A673 (cell line): ENCODE measurements at regions of chr6 and their contacts with region 1.

Region 1: GRCh38 chr6:13795041-13795750 is 19.2 kb downstream of the MCUR1 start:
- DNase-seq: peak; percentile 92
- H3K4me3 ChIP-seq: peak overlapping the region; percentile 1
- H3K27ac ChIP-seq: peak overlapping the region; percentile 83
- H3K4me1 ChIP-seq: peaks cover 24% of the 10 kb centered on the region
- H3K27me3 ChIP-seq: no peaks in the 10 kb centered on the region
- CTCF ChIP-seq: peak; percentile 98

Region 2: DNA sequence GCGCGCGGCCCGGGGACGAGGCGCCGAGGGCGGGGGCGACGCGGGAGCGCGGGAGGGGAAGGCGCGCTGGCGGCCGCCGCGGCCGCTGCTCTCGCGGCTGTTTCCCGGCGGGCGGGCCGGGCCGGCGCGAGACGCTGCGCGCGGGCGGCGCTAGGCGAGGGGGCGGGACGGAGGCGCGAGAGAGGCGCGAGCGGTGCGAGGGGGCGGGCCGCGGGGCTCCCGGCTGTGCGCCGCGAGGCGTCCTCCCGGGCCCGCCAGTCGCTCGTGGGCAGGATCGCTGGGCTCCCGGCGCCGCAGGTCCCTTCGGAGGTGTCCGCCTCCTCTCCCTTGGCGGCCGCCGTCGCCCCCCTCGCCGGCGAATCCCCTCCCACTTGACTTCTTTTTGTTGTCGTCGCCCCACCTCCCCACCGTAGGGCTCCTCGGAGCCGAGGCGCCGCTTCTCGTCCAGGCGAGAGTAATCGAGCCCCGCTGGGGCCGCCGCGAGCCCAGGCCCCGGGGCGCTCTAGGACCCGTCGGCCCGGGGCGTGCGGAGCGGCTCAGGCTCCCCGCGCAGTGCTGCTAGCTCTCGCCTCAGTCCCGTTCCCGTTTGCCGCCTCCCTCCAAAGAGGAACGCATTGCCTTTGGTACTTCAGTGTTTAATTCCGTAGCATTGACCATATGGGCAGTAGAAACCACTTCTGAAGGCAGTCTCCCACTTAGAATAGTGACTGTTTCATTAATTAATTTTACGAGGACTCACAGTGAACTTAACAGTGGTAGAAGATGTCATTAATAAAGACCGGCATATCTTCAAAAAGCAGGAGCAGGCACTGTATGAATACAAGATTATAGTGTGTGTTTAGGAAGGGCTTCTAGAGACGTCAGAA is 83.2 kb before region 1 on chr6 and contains the start of gene RANBP9:
- CTCF ChIA-PET with region 1: no interaction called
- POLR2A ChIA-PET with region 1: no interaction called
- intact Hi-C with region 1: loop called (anchors 5 kb)
- DNase-seq: peak; percentile 97
- H3K4me3 ChIP-seq: peak within 1 kb of the TSS; percentile 94
- H3K27ac ChIP-seq: peak within 1 kb of the TSS; percentile 90
- H3K4me1 ChIP-seq: peaks cover 17% of the 10 kb centered on the region
- H3K27me3 ChIP-seq: no peaks in the 10 kb centered on the region
- CTCF ChIP-seq: no peak
- total RNA-seq, gene RANBP9: 57.4 and 58.2 TPM in 2 replicates

Region 3: DNA sequence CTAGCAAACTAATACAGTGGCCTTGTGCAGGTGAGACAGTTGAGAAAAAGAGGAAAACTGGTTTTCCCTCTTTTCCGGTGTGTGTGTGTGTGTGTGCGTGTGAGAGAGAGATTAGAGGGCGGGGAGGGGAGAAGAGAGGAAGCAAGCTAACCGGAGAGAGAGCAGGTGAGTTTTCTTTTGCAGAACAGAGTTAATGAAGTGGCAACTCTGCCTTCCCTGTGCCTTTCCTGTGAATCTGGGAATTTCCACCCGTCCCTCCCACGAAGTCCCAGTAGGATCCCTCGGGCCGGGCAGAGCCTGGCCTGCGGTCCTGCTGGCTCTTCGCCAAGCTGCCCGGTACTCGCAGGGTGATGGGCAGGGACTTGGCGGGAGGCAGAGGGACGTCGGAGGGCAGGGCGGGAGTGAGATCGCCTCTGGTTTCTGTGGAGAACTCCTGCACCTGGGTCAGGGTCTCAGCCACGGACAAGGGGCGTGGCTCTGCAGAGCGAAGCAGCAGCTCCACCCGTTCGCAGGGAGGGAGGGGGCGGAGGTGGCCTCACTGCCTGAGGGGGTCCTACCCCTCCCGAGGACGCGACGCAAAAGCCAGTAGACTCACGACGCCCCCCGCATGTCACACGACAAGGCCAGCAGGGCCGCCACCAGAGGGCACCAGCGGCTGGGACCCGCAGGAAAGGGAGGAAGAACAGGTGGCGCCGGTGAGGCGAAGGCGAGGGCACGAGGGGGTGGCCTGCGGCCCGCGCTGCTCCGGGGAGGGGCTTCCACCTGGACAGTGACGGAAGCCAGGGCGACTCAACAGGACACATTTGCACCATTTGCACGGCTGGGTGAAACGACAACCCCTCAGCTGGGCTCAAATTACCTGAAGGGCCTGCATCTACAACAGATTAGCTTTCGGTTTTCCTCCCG is 78.3 kb after region 1 on chr6:
- CTCF ChIA-PET with region 1: interaction called, 3 read pairs
- POLR2A ChIA-PET with region 1: no interaction called
- intact Hi-C with region 1: loop called (anchors 5 kb)
- DNase-seq: peak; percentile 80
- H3K4me3 ChIP-seq: peak overlapping the region; percentile 38
- H3K27ac ChIP-seq: no peak overlapping the region
- H3K4me1 ChIP-seq: peaks cover 6% of the 10 kb centered on the region
- H3K27me3 ChIP-seq: no peaks in the 10 kb centered on the region
- CTCF ChIP-seq: peak; percentile 97

Region 4: GRCh38 chr6:14046476-14047068 is 251.4 kb after region 1 on chr6:
- CTCF ChIA-PET with region 1: no interaction called
- POLR2A ChIA-PET with region 1: no interaction called
- intact Hi-C with region 1: loop called (anchors 2 kb)
- DNase-seq: peak; percentile 66
- H3K4me3 ChIP-seq: no peak overlapping the region
- H3K27ac ChIP-seq: no peak overlapping the region
- H3K4me1 ChIP-seq: peaks cover 3% of the 10 kb centered on the region
- H3K27me3 ChIP-seq: no peaks in the 10 kb centered on the region
- CTCF ChIP-seq: peak; percentile 83

Region 5: DNA sequence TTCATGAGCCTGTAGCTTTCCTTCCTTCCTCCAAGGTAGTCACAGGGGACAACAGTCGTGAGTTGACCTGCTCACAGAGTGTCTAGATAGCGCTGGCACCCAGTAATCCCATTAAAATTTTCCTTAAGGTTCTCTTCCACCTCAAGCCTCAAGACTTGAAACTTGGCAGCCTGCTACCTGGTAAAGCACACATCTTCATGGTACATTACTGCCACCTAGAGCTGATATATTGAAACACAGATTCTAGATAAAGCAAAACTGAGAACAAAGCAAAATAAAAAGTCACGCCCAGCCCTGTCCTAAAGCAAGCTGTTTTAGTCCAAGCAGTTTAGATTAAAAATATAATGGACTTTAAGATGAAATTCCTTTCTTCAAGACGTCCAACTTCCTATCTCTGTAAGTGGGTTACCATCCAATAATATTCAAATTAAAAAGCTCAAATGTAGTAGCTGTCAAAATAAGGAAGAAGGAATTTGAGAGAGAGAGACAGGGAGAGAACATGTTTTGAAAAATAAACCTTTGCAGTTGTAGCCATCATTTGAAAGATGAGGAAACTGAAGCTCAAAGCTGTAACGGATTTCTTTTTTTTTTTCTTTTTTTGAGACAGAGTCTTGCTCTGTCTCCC is 271.7 kb after region 1 on chr6:
- CTCF ChIA-PET with region 1: interaction called, 4 read pairs
- POLR2A ChIA-PET with region 1: no interaction called
- intact Hi-C with region 1: loop called (anchors 5 kb)
- DNase-seq: peak; percentile 84
- H3K4me3 ChIP-seq: no peak overlapping the region
- H3K27ac ChIP-seq: no peak overlapping the region
- H3K4me1 ChIP-seq: no peaks in the 10 kb centered on the region
- H3K27me3 ChIP-seq: no peaks in the 10 kb centered on the region
- CTCF ChIP-seq: peak; percentile 75

Region 6: GRCh38 chr6:14144678-14145113 is 349.5 kb after region 1 on chr6:
- CTCF ChIA-PET with region 1: no interaction called
- POLR2A ChIA-PET with region 1: no interaction called
- intact Hi-C with region 1: loop called (anchors 10 kb)
- DNase-seq: peak; percentile 92
- H3K4me3 ChIP-seq: no peak overlapping the region
- H3K27ac ChIP-seq: no peak overlapping the region
- H3K4me1 ChIP-seq: peaks cover 61% of the 10 kb centered on the region
- H3K27me3 ChIP-seq: no peaks in the 10 kb centered on the region
- CTCF ChIP-seq: peak; percentile 97

Region 7: DNA sequence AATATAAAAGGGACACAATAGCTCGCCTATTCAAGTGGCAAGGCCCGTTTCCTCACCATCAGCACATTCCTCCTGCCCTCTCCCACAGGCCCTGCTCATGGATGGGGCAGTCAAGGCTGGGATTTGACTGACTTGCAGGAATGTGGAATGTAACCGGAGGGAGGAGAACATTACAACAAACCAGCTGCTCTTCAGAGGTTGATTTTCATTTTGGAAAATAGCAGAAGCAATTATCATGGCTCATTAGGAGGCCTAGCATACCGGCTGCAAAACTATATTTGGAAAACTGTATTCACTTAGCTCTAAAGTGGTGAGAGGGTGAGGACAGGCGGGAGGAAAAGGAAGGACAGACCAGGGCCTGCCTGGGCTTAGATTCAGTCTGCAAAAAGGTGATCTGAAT is 606.0 kb after region 1 on chr6:
- CTCF ChIA-PET with region 1: no interaction called
- POLR2A ChIA-PET with region 1: no interaction called
- intact Hi-C with region 1: no loop called
- DNase-seq: no peak
- H3K4me3 ChIP-seq: no peak overlapping the region
- H3K27ac ChIP-seq: no peak overlapping the region
- H3K4me1 ChIP-seq: no peaks in the 10 kb centered on the region
- H3K27me3 ChIP-seq: no peaks in the 10 kb centered on the region
- CTCF ChIP-seq: no peak